ENCODE measurements at regions of chr1 and their contacts with region 1.

Region 1: GRCh38 chr1:56376188-56376984 is 203.0 kb downstream of the PLPP3 start:
- DNase-seq: no peak

Region 2: GRCh38 chr1:56301847-56302246 is 74.5 kb before region 1 on chr1:
- intact Hi-C with region 1: loop called (anchors 5 kb)
- DNase-seq: no peak

Region 3: DNA sequence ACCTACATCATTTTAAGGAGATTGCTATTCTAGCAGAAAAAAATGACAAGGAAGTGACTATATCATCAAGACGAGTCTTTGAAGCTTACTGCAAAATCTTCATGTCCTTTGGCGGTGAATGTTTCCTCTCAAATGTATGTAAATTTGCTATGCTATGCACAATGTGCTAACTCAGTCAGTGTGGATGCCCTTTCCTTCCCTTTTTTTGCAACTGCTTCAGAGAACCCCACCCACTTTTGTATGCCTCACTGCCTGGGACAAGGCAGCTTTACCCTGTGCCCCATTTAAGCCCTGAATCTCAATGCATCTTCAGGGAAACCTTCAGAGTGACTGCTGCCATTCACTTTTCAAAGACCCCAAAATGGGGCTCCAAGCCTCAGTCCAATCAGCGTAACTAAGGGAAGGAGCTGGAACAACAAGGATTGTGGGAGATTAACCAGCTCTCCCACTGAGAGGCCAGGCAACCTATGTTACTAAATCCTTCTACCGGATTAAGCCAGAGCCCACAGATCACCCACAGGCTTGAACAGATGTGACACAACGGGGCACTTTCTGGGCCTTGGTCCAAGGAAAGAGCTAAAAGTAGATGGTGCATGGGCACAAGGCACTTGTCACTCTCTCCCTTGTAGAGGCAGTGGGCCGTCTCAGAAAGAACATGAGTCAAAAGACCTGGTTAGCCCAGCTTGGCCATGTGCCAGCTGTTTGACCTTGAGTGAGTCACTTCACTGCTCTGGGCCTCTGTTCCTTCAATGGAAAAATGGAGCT is 48.5 kb after region 1 on chr1:
- intact Hi-C with region 1: loop called (anchors 5 kb)
- DNase-seq: peak; percentile 86